WTC11 (cell line): ENCODE measurements at regions of chr12 and their contacts with region 1.

Region 1: DNA sequence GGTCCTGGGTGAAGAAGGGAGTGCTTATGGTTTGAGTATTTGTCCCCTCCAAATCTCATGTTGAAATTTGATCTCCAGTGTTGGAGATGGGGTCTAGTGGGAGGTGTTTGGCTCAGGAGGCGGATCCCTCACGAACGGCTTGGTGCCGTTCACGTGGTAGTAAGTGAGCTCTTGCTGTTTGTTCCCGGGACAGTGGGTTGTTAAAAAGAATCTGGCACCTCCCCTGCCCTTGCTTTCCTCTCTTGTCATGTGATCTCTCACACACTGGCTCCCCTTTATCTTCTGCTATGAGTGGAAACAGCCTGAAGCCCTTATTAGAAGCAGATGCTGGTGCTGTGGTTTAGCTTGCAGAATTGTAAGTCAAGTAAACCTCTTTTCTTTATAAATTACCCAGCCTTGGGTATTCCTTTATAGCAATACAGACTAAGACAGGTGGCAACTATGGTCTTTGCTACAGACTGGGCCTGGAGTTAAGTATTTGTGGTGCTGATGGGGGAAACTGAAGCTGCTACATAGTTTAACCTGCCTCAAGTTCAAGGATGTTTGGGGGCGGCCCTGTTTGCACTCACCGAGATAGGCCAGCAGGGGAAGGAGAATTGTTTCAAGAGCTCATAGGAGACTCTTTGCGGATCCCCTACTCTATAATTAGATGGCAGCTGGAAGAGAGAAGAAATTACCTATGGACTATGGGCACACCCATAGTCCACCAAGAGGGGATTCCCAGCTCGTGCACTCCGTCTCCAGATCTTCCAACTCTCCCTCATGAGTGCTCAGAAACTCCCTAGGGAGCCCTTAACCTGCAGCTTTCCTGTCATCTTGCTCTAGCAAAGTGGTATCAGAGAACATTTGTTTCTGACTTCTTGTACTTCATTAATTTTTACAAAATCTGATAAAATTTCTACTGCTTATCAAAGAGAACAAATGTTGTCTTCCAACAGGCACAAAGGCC is 164.6 kb downstream of the SLC15A5 start:
- DNase-seq: peak; percentile 43
- ATAC-seq: peak; percentile 95
- H3K4me3 Mint-ChIP-seq: peak overlapping the region; percentile 63
- H3K27ac Mint-ChIP-seq: peak overlapping the region; percentile 84
- H3K4me1 Mint-ChIP-seq: peaks cover 23% of the 10 kb centered on the region
- H3K27me3 Mint-ChIP-seq: no peaks in the 10 kb centered on the region
- CTCF ChIP-seq: no peak

Region 2: GRCh38 chr12:16076553-16076952 is 36.3 kb before region 1 on chr12:
- CTCF ChIA-PET with region 1: interaction called, 10 read pairs
- POLR2A ChIA-PET with region 1: no interaction called
- DNase-seq: no peak
- ATAC-seq: peak; percentile 97
- H3K4me3 Mint-ChIP-seq: no peak overlapping the region
- H3K27ac Mint-ChIP-seq: no peak overlapping the region
- H3K4me1 Mint-ChIP-seq: no peaks in the 10 kb centered on the region
- H3K27me3 Mint-ChIP-seq: no peaks in the 10 kb centered on the region; the same call in 1 of the 2 replicates
- CTCF ChIP-seq: peak; percentile 32; the same call in 1 of the 2 replicates